Activated naive CD4-positive, alpha-beta T cell treated with anti-CD3 and anti-CD28 coated beads, Interleukin-2, amount 10 ng/mL, durations not matched to agents 7 days and 5 days (primary cell): ENCODE measurements at regions of chr20 and their contacts with region 1.

Region 1: GRCh38 chr20:45771182-45771759 is 20.4 kb downstream of the WFDC3 start:
- DNase-seq: peak; percentile 88
- H3K4me3 Mint-ChIP-seq: no peak overlapping the region
- H3K27ac Mint-ChIP-seq: no peak overlapping the region
- H3K4me1 Mint-ChIP-seq: peaks cover 4% of the 10 kb centered on the region
- H3K27me3 Mint-ChIP-seq: peaks cover 26% of the 10 kb centered on the region

Region 2: DNA sequence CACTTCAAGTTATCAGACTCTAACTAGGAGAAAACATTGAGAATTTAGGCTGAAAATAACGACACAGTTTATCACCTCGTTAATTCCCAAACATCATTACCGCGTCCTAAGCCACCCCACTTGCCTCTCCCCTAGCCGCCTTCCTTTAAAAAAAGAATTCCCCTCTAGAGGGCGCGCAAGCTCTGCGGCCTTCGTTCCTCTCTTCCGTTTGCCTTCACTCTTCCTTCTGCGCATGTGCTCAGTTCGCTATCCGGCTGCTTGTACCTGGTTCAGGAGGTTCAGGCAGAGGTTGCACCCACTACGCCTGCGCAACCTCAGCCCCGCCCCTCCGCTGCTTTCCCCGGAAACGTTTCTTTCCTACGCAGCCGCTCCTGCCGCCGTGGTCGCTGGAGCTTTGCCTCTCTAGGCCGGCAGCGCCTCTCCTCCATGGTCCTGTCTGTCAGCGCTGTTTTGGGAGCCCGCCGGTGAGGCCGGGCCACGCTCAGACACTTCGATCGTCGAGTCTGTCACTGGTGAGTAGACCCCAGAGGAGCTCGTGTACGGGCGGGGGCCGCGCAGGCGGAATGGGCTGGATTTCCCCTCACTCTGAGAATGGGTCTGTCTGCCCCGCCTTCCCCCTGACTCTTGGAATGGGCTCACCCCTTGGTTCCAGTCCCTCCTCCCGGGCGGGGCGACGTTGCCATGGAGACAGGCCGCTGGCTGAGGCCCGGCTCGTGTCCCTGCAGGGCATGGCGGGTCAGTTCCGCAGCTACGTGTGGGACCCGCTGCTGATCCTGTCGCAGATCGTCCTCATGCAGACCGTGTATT is 408.3 kb before region 1 on chr20 and contains the start of gene SYS1:
- CTCF ChIA-PET with region 1: interaction called, 19 read pairs
- DNase-seq: peak; percentile 99
- H3K4me3 Mint-ChIP-seq: peak within 1 kb of the TSS; percentile 91
- H3K27ac Mint-ChIP-seq: peak within 1 kb of the TSS; percentile 91
- H3K4me1 Mint-ChIP-seq: peaks cover 54% of the 10 kb centered on the region
- H3K27me3 Mint-ChIP-seq: no peaks in the 10 kb centered on the region

Region 3: DNA sequence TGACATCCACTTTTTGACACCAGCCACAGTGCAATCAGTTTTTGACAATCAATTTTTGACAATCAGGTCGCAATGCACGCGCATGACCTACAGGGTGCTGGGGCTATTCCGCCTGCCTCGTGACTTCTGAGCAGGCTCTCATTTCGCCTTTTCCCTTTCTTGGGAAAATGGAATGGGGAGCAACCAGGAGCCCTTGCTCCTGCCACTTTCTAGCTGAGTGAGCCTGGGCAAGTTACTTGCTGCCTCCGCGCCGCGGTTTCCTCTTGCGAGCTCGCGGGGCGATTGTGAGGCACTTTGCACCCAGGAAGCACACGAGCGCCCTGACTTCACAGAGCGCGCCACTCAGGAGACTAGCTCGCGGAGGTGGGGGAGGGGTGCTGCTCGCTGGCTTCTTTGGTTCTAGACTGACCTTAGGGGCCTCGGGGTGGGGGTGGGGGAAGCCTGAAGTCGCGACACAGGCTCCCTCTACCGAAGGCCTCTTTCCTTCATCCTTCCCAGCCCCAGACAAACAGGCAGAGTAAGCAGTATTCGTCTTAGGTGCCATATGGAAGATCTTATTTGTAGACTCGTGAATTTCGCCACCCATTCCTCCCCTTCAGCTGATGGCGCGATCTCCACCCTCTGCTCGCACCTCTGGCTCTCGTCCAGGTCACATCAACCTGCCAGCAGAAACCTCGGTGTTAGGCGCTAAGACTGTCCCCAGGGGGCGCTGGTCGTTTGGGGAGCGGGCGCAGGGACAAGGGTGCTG is 397.7 kb before region 1 on chr20:
- CTCF ChIA-PET with region 1: interaction called, 19 read pairs
- DNase-seq: peak; percentile 90
- H3K4me3 Mint-ChIP-seq: peak overlapping the region; percentile 70
- H3K27ac Mint-ChIP-seq: peak overlapping the region; percentile 87
- H3K4me1 Mint-ChIP-seq: peaks cover 44% of the 10 kb centered on the region
- H3K27me3 Mint-ChIP-seq: no peaks in the 10 kb centered on the region

Region 4: DNA sequence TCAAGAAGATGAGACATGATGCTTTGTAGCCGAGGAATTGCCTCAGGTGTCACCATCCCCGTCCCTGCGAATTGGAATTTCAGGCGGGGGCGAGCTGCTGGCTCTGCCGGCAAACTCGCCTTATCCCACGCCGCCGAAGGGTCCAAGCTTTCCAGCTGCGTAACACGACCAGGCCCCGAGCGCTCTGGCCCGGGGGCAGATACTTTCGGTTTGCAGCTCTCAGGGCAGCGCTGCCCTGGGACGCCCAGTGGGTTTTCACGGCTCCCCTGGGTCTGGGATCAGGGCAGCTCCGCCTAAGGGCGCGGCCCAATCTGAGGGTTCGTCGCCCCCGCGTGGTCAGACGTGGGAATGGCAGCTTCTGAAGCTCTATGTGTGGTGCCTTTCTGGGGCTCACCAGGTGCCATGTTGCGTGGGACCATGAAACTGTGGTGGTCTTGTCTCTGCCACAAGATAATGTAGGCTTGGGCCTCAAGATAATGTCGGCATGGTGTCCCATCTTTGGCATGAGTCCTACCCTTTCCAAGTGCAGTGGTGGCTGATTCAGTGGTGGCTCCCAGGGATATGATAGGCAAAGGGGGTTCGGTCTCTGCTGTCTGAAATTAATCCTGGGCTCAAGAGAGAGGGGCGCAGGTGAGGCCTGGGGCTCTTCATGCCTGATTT is 334.4 kb before region 1 on chr20:
- CTCF ChIA-PET with region 1: interaction called, 22 read pairs
- DNase-seq: peak; percentile 90
- H3K4me3 Mint-ChIP-seq: peak overlapping the region; percentile 73
- H3K27ac Mint-ChIP-seq: no peak overlapping the region
- H3K4me1 Mint-ChIP-seq: peaks cover 29% of the 10 kb centered on the region
- H3K27me3 Mint-ChIP-seq: peaks cover 7% of the 10 kb centered on the region

Region 5: GRCh38 chr20:45456632-45457031 is 314.6 kb before region 1 on chr20:
- CTCF ChIA-PET with region 1: interaction called, 51 read pairs
- DNase-seq: peak; percentile 69
- H3K4me3 Mint-ChIP-seq: no peak overlapping the region
- H3K27ac Mint-ChIP-seq: no peak overlapping the region
- H3K4me1 Mint-ChIP-seq: no peaks in the 10 kb centered on the region
- H3K27me3 Mint-ChIP-seq: peaks cover 15% of the 10 kb centered on the region

Region 6: GRCh38 chr20:45592574-45593189 is 178.6 kb before region 1 on chr20:
- CTCF ChIA-PET with region 1: interaction called, 44 read pairs
- DNase-seq: peak; percentile 43
- H3K4me3 Mint-ChIP-seq: no peak overlapping the region
- H3K27ac Mint-ChIP-seq: no peak overlapping the region
- H3K4me1 Mint-ChIP-seq: no peaks in the 10 kb centered on the region
- H3K27me3 Mint-ChIP-seq: peaks cover 20% of the 10 kb centered on the region

Region 7: DNA sequence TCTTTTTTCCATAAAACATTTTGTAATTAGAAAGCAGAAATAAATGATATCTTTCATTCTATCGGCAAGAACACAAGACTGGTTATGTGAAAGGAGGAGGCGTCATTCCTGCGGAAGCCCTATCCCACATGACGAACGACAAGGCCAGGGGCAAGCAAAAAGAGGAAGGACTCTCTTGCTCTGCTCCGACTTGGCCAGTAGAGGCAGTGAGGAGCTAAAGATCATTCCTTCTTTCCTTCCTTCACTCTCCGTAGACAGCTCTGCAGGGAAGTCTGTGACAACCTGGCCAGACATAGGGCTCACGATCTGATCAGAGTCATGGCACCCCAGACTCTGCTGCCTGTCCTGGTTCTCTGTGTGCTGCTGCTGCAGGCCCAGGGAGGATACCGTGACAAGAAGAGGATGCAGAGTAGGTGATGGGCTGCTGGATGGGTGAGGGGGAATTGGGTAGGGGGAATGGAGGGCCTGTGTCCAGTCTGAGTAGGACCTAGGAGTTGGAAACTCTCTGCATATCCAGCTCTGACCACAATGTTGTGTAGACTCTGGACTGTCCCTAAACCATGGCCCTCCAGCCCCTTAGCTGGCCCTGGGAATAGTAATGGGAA is 141.7 kb before region 1 on chr20 and contains the start of gene WFDC10A:
- CTCF ChIA-PET with region 1: interaction called, 12 read pairs
- DNase-seq: peak; percentile 28
- H3K4me3 Mint-ChIP-seq: no peak within 1 kb of the TSS
- H3K27ac Mint-ChIP-seq: no peak within 1 kb of the TSS
- H3K4me1 Mint-ChIP-seq: no peaks in the 10 kb centered on the region
- H3K27me3 Mint-ChIP-seq: peaks cover 17% of the 10 kb centered on the region